Aorta (tissue), 5 donors: ENCODE measurements at regions of chrX and their contacts with region 1.

Region 1: GRCh38 chrX:20527558-20528011 is 260.9 kb upstream of the RPS6KA3 start:
- DNase-seq: no peak
- ATAC-seq: no peak
- H3K4me3 ChIP-seq: no peak overlapping the region
- H3K27ac ChIP-seq: no peak overlapping the region
- H3K4me1 ChIP-seq: no peaks in the 10 kb centered on the region
- H3K27me3 ChIP-seq: no peaks in the 10 kb centered on the region

Region 2: GRCh38 chrX:21479695-21480270 is 952.2 kb after region 1 on chrX:
- intact Hi-C with region 1: loop called in 1 of 2 experiments (anchors 5 kb)
- DNase-seq: no peak
- ATAC-seq: peak; percentile 54
- H3K4me3 ChIP-seq: no peak overlapping the region
- H3K27ac ChIP-seq: no peak overlapping the region
- H3K4me1 ChIP-seq: no peaks in the 10 kb centered on the region
- H3K27me3 ChIP-seq: no peaks in the 10 kb centered on the region

Region 3: DNA sequence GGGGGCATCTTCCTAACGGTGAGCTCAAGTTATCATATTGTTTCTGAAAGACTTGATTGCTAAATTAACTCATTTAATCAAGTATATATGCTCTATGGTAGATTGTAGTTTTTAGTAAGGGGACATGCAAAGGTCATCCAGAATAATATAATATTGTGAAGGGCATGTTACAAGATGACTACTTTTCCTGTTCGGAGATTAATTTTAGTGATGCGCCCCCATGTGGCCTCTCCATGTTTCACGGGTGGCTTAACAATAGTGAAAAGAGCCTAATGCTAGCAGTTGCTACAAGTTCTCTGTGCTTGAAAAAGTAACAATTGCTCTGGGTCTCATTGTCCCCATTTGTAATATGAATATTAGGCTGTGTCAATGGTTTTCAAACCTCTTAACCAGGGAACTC is 1218.2 kb after region 1 on chrX:
- intact Hi-C with region 1: loop called (anchors 5 kb)
- DNase-seq: peak in 1 of 2 donors; percentile 51
- ATAC-seq: no peak
- H3K4me3 ChIP-seq: no peak overlapping the region
- H3K27ac ChIP-seq: no peak overlapping the region
- H3K4me1 ChIP-seq: no peaks in the 10 kb centered on the region
- H3K27me3 ChIP-seq: no peaks in the 10 kb centered on the region